ENCODE measurements at regions of chr5 and their contacts with region 1.

Region 1: GRCh38 chr5:140244525-140245025 is 58.3 kb downstream of the PFDN1 start:
- DNase-seq: no peak
- ATAC-seq: peak; percentile 92
- H3K4me3 ChIP-seq: no peak overlapping the region
- H3K27ac ChIP-seq: no peak overlapping the region
- H3K4me1 ChIP-seq: peaks cover 4% of the 10 kb centered on the region; the same call in 1 of the 2 replicates
- H3K27me3 ChIP-seq: no peaks in the 10 kb centered on the region
- CTCF ChIP-seq: peak; percentile 70 to 90 (median 85); a peak in 5 of 6 replicates
- EP300 ChIP-seq: no peak
- POLR2A ChIP-seq: no peak
- RAD21 ChIP-seq: peak; percentile 84

Region 2: DNA sequence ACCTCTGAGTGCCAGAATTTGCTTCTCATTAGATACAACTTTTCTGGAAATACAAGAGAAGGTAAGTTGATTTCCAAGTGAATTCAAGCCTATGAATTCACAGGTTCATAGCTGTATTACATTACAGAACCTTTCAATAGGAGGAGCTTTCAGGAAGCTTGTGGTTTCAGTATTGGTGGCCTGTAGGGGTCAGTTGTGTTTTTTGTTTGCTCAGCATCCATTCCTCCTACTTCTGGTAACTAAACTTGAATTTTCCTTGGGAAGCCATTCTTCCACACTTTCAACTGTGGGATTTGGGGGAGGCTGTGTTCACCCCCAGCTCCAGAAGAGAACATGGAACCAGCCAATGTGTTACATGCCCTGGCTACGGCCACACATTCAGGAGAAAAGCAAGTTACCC is 75.2 kb before region 1 on chr5:
- CTCF ChIA-PET with region 1: interaction called, 36 read pairs
- POLR2A ChIA-PET with region 1: interaction called, 5 read pairs
- RAD21 ChIA-PET with region 1: interaction called, 14 read pairs
- SMC1A ChIA-PET with region 1: interaction called, 11 read pairs
- in situ Hi-C with region 1: no loop called
- intact Hi-C with region 1: no loop called
- DNase-seq: no peak
- ATAC-seq: peak; percentile 68
- H3K4me3 ChIP-seq: no peak overlapping the region
- H3K27ac ChIP-seq: no peak overlapping the region
- H3K4me1 ChIP-seq: peaks cover 18% of the 10 kb centered on the region
- H3K27me3 ChIP-seq: no peaks in the 10 kb centered on the region
- CTCF ChIP-seq: peak in 1 of 3 experiments; percentile 47; a peak in 2 of 6 replicates
- EP300 ChIP-seq: no peak
- POLR2A ChIP-seq: no peak
- RAD21 ChIP-seq: 0 out of 2 replicates have a peak, but pooled peaks have one; percentile 10

Region 3: GRCh38 chr5:140227048-140227447 is 17.5 kb before region 1 on chr5:
- CTCF ChIA-PET with region 1: interaction called, 21 read pairs
- POLR2A ChIA-PET with region 1: interaction called, 3 read pairs
- RAD21 ChIA-PET with region 1: interaction called, 3 read pairs
- SMC1A ChIA-PET with region 1: interaction called, 9 read pairs
- in situ Hi-C with region 1: no loop called
- intact Hi-C with region 1: no loop called
- DNase-seq: no peak
- ATAC-seq: peak; percentile 49
- H3K4me3 ChIP-seq: no peak overlapping the region
- H3K27ac ChIP-seq: no peak overlapping the region
- H3K4me1 ChIP-seq: peaks cover 3% of the 10 kb centered on the region; the same call in 1 of the 2 replicates
- H3K27me3 ChIP-seq: no peaks in the 10 kb centered on the region
- CTCF ChIP-seq: peak in 1 of 3 experiments; percentile 19; a peak in 1 of 6 replicates
- EP300 ChIP-seq: no peak
- POLR2A ChIP-seq: no peak
- RAD21 ChIP-seq: peak; percentile 39

Region 4: DNA sequence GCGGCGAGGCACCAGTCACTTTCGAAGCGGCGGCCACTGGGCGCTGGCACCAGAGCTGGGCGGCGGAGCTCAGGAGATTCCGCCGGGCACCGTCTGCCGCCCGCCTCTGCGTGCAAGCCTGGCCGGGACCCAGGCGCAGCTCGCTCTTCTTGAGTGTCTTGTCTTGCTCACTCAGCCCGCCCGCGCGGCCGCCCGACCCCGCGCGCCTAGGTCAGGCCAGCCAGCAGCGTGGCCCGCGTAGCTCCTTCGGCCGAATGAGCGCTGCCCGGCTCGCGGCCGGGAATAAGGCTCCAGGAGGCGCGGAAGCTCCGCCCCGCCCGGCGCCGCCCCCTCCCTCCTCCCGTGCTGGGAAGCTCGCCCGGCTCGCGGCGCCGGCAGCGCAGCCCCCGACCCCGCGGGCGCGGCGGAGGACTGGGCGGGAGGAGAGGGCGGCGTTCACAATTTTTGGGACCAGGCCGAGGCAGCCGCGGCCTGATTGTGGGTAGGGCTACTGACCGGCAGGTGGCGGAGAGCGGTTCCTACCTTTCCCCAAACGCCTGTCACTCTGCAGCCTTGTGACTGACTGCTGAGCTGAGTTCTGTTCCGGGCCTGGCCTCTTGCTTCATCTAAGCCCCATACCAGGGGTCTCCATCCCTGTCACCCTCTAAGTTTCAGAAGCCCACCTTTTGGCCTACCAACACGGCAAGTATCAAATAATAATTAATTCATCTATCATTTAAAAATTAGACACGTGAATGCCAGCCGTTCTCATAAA is 102.0 kb after region 1 on chr5 and contains the start of gene HBEGF:
- CTCF ChIA-PET with region 1: interaction called, 774 read pairs
- POLR2A ChIA-PET with region 1: interaction called, 8 read pairs
- RAD21 ChIA-PET with region 1: interaction called, 131 read pairs
- SMC1A ChIA-PET with region 1: interaction called, 345 read pairs
- in situ Hi-C with region 1: no loop called
- intact Hi-C with region 1: loop called (anchors 1 kb)
- DNase-seq: no peak
- ATAC-seq: peak; percentile 80
- H3K4me3 ChIP-seq: peak within 1 kb of the TSS; percentile 66; the same call in 1 of the 2 replicates
- H3K27ac ChIP-seq: no peak within 1 kb of the TSS
- H3K4me1 ChIP-seq: peaks cover 28% of the 10 kb centered on the region
- H3K27me3 ChIP-seq: no peaks in the 10 kb centered on the region; a peak in 1 of 4 replicates
- CTCF ChIP-seq: peak; percentile 49 to 65 (median 55)
- EP300 ChIP-seq: no peak
- POLR2A ChIP-seq: peak; percentile 62
- RAD21 ChIP-seq: no peak
- polyA plus RNA-seq, gene HBEGF: 0.87 to 1.5 TPM

Region 5: DNA sequence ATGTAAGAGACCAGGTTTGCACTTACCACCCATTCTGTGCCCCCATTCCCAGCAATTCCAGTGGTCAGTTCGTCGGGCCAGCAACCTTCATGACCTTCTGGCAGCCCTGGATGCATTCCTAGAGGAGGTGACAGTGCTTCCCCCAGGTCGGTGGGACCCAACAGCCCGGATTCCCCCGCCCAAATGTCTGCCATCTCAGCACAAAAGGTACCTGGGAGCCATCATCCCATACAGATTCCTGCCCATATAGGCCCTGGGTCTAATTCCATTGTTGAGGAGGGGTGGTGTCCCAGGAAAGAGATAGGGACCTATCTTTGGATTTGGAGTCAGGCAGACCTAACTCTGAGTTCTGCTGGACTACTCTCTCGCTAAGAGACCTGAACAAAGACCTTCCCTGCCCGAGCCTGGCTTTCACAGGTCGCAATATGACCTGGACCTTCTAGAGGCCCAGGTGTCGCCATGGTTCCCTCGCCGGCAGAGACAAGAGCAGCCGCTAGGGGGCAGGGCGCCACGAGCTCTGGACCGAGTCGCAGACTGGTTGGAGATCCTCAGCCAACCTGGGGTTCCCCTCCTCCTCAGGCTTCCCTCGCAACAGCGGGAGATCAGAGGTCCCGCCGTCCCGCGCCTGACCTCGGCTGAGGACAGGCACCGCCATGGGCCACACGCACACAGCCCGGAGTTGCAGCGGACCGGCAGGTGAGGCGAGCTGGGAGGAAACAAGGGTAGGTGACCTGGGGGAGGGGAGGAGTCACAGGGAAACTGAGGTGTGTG is 118.5 kb after region 1 on chr5:
- CTCF ChIA-PET with region 1: interaction called, 44 read pairs
- POLR2A ChIA-PET with region 1: interaction called, 3 read pairs
- RAD21 ChIA-PET with region 1: interaction called, 22 read pairs
- SMC1A ChIA-PET with region 1: interaction called, 20 read pairs
- in situ Hi-C with region 1: loop called (anchors 5 kb)
- intact Hi-C with region 1: no loop called
- DNase-seq: no peak
- ATAC-seq: peak; percentile 97
- H3K4me3 ChIP-seq: peak overlapping the region; percentile 57; the same call in 1 of the 2 replicates
- H3K27ac ChIP-seq: no peak overlapping the region
- H3K4me1 ChIP-seq: no peaks in the 10 kb centered on the region; the same call in 1 of the 2 replicates
- H3K27me3 ChIP-seq: no peaks in the 10 kb centered on the region
- CTCF ChIP-seq: peak; percentile 96 to 97 (median 96)
- EP300 ChIP-seq: no peak
- POLR2A ChIP-seq: no peak
- RAD21 ChIP-seq: peak; percentile 72

Region 6: GRCh38 chr5:141040771-141041426 is 796.3 kb after region 1 on chr5:
- CTCF ChIA-PET with region 1: no interaction called
- POLR2A ChIA-PET with region 1: no interaction called
- RAD21 ChIA-PET with region 1: no interaction called
- SMC1A ChIA-PET with region 1: no interaction called
- in situ Hi-C with region 1: loop called (anchors 25 kb)
- intact Hi-C with region 1: no loop called
- DNase-seq: no peak
- ATAC-seq: peak; percentile 37
- H3K4me3 ChIP-seq: no peak overlapping the region
- H3K27ac ChIP-seq: no peak overlapping the region
- H3K4me1 ChIP-seq: no peaks in the 10 kb centered on the region
- H3K27me3 ChIP-seq: no peaks in the 10 kb centered on the region
- CTCF ChIP-seq: peak; percentile 27 to 39 (median 36); a peak in 4 of 6 replicates
- EP300 ChIP-seq: no peak
- POLR2A ChIP-seq: no peak
- RAD21 ChIP-seq: peak; percentile 44